ENCODE measurements at regions of chr10 and their contacts with region 1.

Region 1: GRCh38 chr10:128859738-128860386 is 607.2 kb upstream of the MGMT start:
- DNase-seq: peak in 1 of 2 donors; percentile 49
- ATAC-seq: no peak
- H3K4me3 ChIP-seq: no peak overlapping the region
- H3K27ac ChIP-seq: no peak overlapping the region
- H3K4me1 ChIP-seq: peaks cover 6 to 21% (median 12%) of the 10 kb centered on the region in 9 donors
- H3K27me3 ChIP-seq: no peaks in the 10 kb centered on the region
- CTCF ChIP-seq: peak; percentile 44 to 69 (median 62)

Region 2: DNA sequence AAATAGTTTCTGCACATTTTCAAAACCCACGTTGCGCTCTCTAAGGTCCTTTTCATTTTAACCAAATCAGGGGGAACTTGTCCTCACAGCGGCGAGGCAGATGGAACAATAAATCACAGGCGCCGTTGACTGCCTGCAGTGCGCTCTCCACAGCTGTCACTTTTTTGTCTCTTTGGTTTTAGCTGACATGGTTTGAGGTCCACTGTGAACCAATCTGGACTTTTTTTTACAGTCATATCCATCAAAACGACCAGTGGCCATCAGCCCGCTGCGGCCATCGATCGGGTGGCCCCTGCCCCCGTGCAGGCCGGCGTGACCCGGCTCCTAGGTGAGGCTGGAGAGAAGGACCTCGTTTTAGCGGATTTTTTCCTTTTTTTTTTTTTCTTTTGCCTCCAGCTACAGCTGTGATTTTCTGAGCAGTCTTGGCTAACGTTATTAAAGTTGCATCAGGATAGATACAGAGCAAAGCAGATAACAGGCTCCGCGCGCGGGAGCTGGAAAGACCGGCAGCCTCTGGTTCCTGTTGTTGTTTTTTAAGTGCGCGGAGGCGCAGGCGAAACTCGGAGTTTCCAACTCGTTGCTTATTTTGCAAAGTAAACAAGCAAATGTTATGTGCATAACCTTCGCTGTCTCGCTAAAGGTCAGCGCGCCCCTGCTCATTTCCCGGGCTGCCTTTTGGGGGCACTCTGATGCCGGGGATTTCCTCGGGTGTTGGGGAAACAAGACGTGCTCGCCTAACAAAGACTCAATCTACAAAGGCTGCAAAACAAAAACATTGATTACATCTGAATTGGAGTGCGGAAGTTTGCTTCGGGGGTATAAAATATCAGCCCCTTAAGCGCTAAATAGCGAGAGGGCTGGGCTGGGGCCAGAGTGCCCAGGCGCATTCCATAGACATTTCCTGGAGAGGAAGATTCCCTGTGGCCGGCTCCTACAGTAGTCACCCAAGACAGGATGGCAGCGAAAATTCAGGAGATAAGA is 318.8 kb before region 1 on chr10:
- intact Hi-C with region 1: loop called in 4 of 10 experiments (anchors 5 to 10 kb)
- DNase-seq: peak; percentile 7 to 23
- ATAC-seq: peak in 6 of 8 donors; percentile 36 to 71 (median 50)
- H3K4me3 ChIP-seq: peak overlapping the region in 9 of 10 donors; percentile 20 to 49 (median 27)
- H3K27ac ChIP-seq: peak overlapping the region in 6 of 10 donors; percentile 28 to 80 (median 66)
- H3K4me1 ChIP-seq: peaks cover 0 to 24% (median 7%) of the 10 kb centered on the region in 9 donors
- H3K27me3 ChIP-seq: peaks cover 0 to 66% (median 49%) of the 10 kb centered on the region in 7 donors
- CTCF ChIP-seq: peak in 6 of 9 donors; percentile 21 to 55 (median 38)

Region 3: DNA sequence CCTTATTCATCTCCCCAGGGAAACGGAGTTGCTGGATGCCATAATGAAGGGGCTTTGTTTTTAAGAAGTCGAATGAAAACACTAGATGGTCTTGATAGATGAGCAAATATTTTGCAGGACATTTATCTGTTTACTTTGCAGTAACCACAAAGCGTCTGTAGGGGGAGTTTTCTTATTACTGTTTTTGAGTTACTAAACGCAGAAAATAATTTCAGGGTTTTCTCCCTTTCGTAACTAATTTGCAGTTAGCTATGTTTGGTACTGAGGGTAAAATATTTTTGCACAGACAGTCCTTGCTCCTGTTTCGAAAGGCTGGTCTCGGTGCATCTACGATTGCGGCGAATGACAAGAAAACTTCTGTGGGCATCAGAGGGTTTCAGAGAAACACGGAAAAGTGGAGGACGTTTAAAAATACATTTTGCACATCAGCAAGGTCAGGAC is 228.0 kb before region 1 on chr10:
- intact Hi-C with region 1: loop called in 9 of 10 experiments (anchors 2 to 10 kb)
- DNase-seq: peak in 1 of 2 donors; percentile 41
- ATAC-seq: peak in 1 of 8 donors; percentile 19
- H3K4me3 ChIP-seq: no peak overlapping the region
- H3K27ac ChIP-seq: no peak overlapping the region
- H3K4me1 ChIP-seq: peaks cover 0 to 16% (median 0%) of the 10 kb centered on the region in 9 donors
- H3K27me3 ChIP-seq: peaks cover 0 to 12% (median 4%) of the 10 kb centered on the region in 7 donors
- CTCF ChIP-seq: peak; percentile 56 to 73 (median 68)

Region 4: DNA sequence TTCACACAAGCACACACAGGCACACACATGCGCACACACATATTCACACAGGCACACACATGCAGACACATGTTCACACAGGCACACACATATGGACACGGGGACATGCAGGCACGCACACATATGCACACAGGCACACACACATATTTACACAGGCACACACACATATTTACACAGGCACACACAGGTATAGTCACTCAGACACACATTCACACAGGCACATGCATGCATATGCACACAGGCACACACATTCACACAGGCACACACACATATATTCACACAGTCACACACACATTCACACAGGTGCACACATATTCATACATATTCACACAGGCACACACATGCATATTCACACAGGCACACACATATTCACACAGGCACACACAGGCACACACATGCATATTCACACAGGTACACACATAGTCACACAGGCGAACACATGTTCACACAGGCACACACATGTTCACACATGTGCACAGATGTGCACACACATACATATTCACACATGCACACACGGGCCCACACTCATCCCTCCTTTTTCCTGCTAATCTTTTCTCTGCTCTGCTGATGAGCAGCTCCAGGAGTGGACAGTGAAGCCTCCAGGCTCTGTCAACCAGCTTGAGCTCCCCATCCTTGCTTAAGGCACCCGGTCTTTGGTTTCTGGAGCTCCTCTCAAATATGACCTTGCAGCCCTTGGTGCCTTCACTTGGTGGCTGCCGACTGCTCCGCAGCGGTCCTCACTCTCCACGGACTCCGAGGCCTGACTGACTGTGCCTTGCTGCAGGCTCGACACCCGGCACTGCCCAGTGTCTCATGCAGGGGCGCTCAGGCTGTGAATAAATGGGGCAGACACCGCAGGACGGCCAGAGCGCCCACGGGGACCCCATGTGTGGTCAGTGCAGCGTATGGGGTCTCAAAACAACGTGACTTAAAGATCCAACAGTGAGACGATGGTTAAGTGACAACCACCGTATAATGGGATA is 26.0 kb after region 1 on chr10:
- intact Hi-C with region 1: no loop called
- DNase-seq: no peak
- ATAC-seq: no peak
- H3K4me3 ChIP-seq: no peak overlapping the region
- H3K27ac ChIP-seq: no peak overlapping the region
- H3K4me1 ChIP-seq: no peaks in the 10 kb centered on the region
- H3K27me3 ChIP-seq: peaks cover 0 to 5% (median 0%) of the 10 kb centered on the region in 7 donors
- CTCF ChIP-seq: no peak

Measured in heart right ventricle (tissue), 16 donors.